ENCODE measurements at regions of chr18 and their contacts with region 1.

Region 1: GRCh38 chr18:34976899-34977837 is 64.0 kb upstream of the MAPRE2 start:
- DNase-seq: peak; percentile 60 to 78 (median 72)
- ATAC-seq: peak; percentile 84
- H3K4me3 ChIP-seq: peak overlapping the region; percentile 74
- H3K4me3 Mint-ChIP-seq: peak overlapping the region; percentile 89 to 99 (median 94)
- H3K27ac ChIP-seq: peak overlapping the region; percentile 54
- H3K27ac Mint-ChIP-seq: peak overlapping the region in 6 of 9 donors; percentile 24 to 72 (median 39)
- H3K4me1 ChIP-seq: no peaks in the 10 kb centered on the region
- H3K4me1 Mint-ChIP-seq: peaks cover 18 to 37% (median 24%) of the 10 kb centered on the region in 7 donors
- H3K27me3 ChIP-seq: peaks cover 0 to 3% of the 10 kb centered on the region in 2 donors
- H3K27me3 Mint-ChIP-seq: peaks cover 0 to 66% (median 0%) of the 10 kb centered on the region in 5 donors

Region 2: GRCh38 chr18:34857320-34857719 is 119.8 kb before region 1 on chr18:
- CTCF ChIA-PET with region 1: no interaction called
- POLR2A ChIA-PET with region 1: no interaction called
- intact Hi-C with region 1: loop called (anchors 1 kb)
- DNase-seq: no peak
- ATAC-seq: no peak
- H3K4me3 ChIP-seq: no peak overlapping the region
- H3K4me3 Mint-ChIP-seq: no peak overlapping the region
- H3K27ac ChIP-seq: no peak overlapping the region
- H3K27ac Mint-ChIP-seq: no peak overlapping the region
- H3K4me1 ChIP-seq: no peaks in the 10 kb centered on the region
- H3K4me1 Mint-ChIP-seq: peaks cover 0 to 12% (median 8%) of the 10 kb centered on the region in 7 donors
- H3K27me3 ChIP-seq: no peaks in the 10 kb centered on the region
- H3K27me3 Mint-ChIP-seq: peaks cover 0 to 32% (median 0%) of the 10 kb centered on the region in 5 donors

Region 3: DNA sequence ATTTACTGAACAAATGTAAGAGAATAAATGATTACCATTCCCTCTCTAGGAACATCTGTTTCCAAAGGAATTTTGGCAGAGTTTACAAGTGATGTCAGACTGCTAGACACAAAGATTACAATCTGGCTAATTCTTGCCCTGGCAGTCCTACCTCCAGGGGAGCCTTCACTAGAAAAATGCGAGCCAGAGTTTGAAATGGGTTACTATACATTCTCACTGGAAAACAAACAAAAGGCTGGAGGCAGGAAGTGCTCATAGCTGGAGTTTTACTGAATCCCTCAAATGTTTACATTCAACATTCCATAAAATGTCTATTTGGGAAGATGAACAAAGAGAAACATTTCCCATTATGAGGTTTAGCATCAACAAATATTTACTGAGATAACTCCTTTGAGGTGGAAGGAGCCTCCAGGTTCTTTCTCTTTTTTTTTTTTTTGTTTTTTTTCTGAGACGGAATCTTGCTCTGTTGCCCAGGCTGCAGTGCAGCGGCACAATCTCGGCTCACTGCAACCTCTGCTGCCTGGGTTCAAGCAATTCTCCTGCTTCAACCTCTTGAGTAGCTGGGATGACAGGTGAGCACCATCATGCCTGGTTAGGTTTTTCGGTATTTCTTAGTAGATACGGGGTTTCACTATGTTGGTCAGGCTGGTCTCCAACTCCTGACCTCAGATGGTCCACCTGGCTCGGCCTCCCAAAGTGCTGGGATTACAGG is 65.0 kb before region 1 on chr18:
- CTCF ChIA-PET with region 1: no interaction called
- POLR2A ChIA-PET with region 1: no interaction called
- intact Hi-C with region 1: no loop called
- DNase-seq: no peak
- ATAC-seq: no peak
- H3K4me3 ChIP-seq: no peak overlapping the region
- H3K4me3 Mint-ChIP-seq: no peak overlapping the region
- H3K27ac ChIP-seq: no peak overlapping the region
- H3K27ac Mint-ChIP-seq: no peak overlapping the region
- H3K4me1 ChIP-seq: no peaks in the 10 kb centered on the region
- H3K4me1 Mint-ChIP-seq: no peaks in the 10 kb centered on the region
- H3K27me3 ChIP-seq: no peaks in the 10 kb centered on the region
- H3K27me3 Mint-ChIP-seq: peaks cover 0 to 5% (median 0%) of the 10 kb centered on the region in 5 donors

Region 4: DNA sequence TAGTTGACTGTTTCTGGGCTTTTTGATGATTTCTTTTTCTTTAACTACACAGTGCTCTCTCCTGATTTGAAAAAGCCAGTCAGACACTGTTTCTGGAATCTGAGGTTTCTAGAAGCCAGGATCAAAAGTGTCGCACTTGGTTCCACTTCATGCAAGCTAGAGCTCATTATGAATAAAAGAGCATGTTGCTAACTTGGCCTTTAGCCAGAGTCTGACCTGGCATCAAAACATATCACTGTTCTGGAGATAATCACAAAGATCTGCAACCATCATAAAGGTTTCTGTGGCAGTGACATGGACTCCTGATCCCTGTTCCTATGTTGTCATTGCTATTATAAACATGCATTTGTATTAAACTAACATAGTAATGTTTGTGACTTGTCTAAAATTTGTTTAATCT is 12.1 kb before region 1 on chr18:
- CTCF ChIA-PET with region 1: no interaction called
- POLR2A ChIA-PET with region 1: no interaction called
- intact Hi-C with region 1: no loop called
- DNase-seq: no peak
- ATAC-seq: no peak
- H3K4me3 ChIP-seq: no peak overlapping the region
- H3K4me3 Mint-ChIP-seq: no peak overlapping the region
- H3K27ac ChIP-seq: no peak overlapping the region
- H3K27ac Mint-ChIP-seq: no peak overlapping the region
- H3K4me1 ChIP-seq: no peaks in the 10 kb centered on the region
- H3K4me1 Mint-ChIP-seq: no peaks in the 10 kb centered on the region
- H3K27me3 ChIP-seq: no peaks in the 10 kb centered on the region
- H3K27me3 Mint-ChIP-seq: peaks cover 0 to 22% (median 3%) of the 10 kb centered on the region in 5 donors

Region 5: GRCh38 chr18:35005963-35006577 is 28.9 kb after region 1 on chr18:
- CTCF ChIA-PET with region 1: interaction called, 3 read pairs
- POLR2A ChIA-PET with region 1: no interaction called
- intact Hi-C with region 1: loop called in 1 of 2 experiments (anchors 5 kb)
- DNase-seq: peak in 7 of 9 donors; percentile 29 to 66 (median 54)
- ATAC-seq: peak; percentile 80
- H3K4me3 ChIP-seq: no peak overlapping the region
- H3K4me3 Mint-ChIP-seq: no peak overlapping the region
- H3K27ac ChIP-seq: no peak overlapping the region
- H3K27ac Mint-ChIP-seq: no peak overlapping the region
- H3K4me1 ChIP-seq: no peaks in the 10 kb centered on the region
- H3K4me1 Mint-ChIP-seq: no peaks in the 10 kb centered on the region
- H3K27me3 ChIP-seq: no peaks in the 10 kb centered on the region
- H3K27me3 Mint-ChIP-seq: no peaks in the 10 kb centered on the region

Region 6: DNA sequence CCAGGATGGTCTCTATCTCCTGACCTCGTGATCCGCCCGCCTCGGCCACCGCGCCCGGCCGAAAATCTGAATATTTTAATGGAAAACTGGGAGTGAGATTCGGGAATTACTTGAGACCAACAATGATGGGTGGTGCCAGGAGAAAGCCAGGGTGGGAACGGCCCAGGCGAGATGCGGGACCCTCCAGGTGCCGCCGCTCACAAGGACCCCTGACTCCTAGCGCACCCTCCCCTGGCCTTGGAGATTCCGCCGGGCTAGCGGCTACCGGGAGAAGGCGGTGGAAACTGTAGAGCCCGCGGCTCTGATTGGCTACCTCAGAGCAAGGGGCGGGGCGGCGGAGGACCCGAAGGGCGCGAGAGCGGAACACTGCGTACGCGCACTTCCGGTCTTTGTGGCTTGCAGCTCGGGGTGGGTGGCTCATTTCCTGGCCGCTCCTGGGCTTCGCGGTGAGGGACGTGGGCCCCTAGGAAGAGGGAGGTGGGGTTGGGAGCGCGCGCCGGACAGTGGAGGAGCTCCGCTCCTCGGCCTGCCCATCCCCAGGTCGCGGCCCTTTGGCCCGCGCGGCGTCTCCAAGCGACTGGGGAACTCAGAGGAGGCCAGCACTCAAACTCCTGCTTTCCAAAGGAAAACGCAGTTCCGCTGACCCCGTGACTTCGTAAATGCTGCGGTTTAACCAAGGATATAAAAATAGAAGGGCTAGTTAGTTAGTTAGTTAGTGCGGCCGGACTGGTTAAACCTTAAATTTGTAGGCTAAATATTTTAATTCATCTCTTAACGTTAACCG is 263.7 kb after region 1 on chr18 and contains the start of gene ZNF397:
- CTCF ChIA-PET with region 1: no interaction called
- POLR2A ChIA-PET with region 1: no interaction called
- intact Hi-C with region 1: loop called in 1 of 2 experiments (anchors 2 kb)
- DNase-seq: peak; percentile 87 to 96 (median 91)
- ATAC-seq: peak; percentile 99
- H3K4me3 ChIP-seq: peak within 1 kb of the TSS; percentile 94
- H3K4me3 Mint-ChIP-seq: peak within 1 kb of the TSS; percentile 88 to 98 (median 96)
- H3K27ac ChIP-seq: peak within 1 kb of the TSS; percentile 97
- H3K27ac Mint-ChIP-seq: peak within 1 kb of the TSS; percentile 90 to 99 (median 98)
- H3K4me1 ChIP-seq: peaks cover 9 to 17% of the 10 kb centered on the region in 2 donors
- H3K4me1 Mint-ChIP-seq: peaks cover 16 to 41% (median 31%) of the 10 kb centered on the region in 7 donors
- H3K27me3 ChIP-seq: no peaks in the 10 kb centered on the region
- H3K27me3 Mint-ChIP-seq: no peaks in the 10 kb centered on the region
- total RNA-seq, gene ZNF397: 12.1 to 59.1 (median 27.6) TPM

Region 7: DNA sequence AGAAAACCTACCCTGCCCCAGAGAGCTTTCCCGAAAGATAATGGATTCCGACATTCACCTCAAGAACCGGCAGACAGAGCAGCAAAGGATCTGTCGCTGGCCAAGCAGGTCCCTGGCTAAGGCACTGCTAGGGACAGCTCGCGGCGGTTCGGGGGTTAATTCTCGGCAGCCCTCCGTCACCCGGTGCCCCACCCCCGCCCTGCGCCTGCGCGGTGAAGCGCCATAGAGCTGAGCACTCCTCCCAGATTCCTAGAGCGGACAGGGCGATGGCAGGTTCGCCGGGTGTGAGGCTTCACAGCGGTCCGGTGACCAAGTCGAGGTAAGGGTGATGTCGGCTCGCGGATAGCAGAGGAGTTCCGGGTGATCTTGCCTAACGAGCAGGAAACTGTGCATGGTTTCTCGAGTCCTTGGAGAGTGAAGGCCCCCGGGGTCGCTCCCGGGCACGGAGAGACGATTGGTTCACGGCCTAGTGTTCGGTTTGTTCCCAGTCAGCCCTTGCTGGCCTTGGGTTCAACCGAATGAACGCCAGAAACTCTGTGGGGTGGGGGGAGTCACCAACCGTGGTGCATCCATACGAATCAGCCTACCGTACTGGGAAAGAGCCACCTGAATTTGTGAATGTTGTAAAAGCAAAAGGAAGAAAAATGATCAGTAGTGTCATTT is 313.0 kb after region 1 on chr18 and contains the start of gene ZSCAN30:
- CTCF ChIA-PET with region 1: no interaction called
- POLR2A ChIA-PET with region 1: interaction called, 3 read pairs
- intact Hi-C with region 1: loop called (anchors 1 to 5 kb)
- DNase-seq: peak; percentile 90 to 96 (median 94)
- ATAC-seq: peak; percentile 99
- H3K4me3 ChIP-seq: peak within 1 kb of the TSS; percentile 90
- H3K4me3 Mint-ChIP-seq: peak within 1 kb of the TSS; percentile 97 to 99 (median 98)
- H3K27ac ChIP-seq: peak within 1 kb of the TSS; percentile 86
- H3K27ac Mint-ChIP-seq: peak within 1 kb of the TSS; percentile 94 to 100 (median 98)
- H3K4me1 ChIP-seq: peaks cover 16 to 18% of the 10 kb centered on the region in 2 donors
- H3K4me1 Mint-ChIP-seq: peaks cover 29 to 86% (median 75%) of the 10 kb centered on the region in 7 donors
- H3K27me3 ChIP-seq: no peaks in the 10 kb centered on the region
- H3K27me3 Mint-ChIP-seq: no peaks in the 10 kb centered on the region
- total RNA-seq, gene ZSCAN30: 14.0 to 23.2 (median 20.8) TPM

Region 8: DNA sequence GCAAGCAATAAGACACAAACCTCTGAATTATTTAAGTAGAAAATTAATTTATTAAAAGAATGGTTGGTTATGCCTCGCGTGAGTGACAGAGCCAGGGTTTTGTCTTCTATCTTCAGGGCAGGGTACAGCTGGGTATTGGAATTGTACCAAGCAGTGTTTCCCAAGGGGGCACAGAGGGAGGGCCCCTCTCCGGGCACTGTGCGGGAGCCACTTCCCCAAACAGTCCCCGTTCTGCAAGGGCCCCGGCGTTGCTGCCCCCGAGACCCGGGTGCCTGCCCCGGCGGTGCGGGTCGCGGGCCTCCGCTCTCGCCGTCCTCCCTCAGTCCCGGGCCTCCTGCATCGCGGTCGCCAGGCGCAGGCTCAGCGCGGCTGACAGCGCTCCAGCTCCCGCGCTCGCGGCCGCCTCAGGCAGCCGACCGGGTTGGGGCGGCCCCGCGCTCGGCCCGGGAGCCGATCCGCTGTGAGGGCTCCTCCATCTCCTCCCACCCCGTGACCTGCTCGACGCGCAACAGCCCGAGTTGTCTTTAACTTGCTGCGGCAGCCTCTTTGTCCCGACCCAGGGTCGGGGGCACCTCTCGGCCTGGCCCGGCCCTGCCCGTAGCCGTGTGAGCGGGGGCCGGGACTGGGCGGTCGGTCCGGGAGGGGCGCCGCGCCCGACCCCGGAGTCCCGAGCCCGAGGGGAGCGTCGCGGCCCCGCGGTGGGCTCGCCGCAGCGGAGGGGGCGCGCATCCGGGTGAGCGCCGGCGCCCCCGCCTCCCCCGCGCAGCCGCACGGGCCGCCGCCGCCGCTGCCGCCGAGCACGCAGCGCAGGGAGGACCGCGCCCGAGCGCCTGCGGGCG is 603.8 kb after region 1 on chr18:
- CTCF ChIA-PET with region 1: no interaction called
- POLR2A ChIA-PET with region 1: no interaction called
- intact Hi-C with region 1: loop called in 1 of 2 experiments (anchors 10 kb)
- DNase-seq: peak; percentile 54 to 70 (median 63)
- ATAC-seq: peak; percentile 84
- H3K4me3 ChIP-seq: peak overlapping the region; percentile 61
- H3K4me3 Mint-ChIP-seq: peak overlapping the region; percentile 60 to 80 (median 72)
- H3K27ac ChIP-seq: peak overlapping the region; percentile 77
- H3K27ac Mint-ChIP-seq: peak overlapping the region in 5 of 9 donors; percentile 37 to 80 (median 63)
- H3K4me1 ChIP-seq: peaks cover 11% of the 10 kb centered on the region in 2 donors
- H3K4me1 Mint-ChIP-seq: peaks cover 13 to 39% (median 28%) of the 10 kb centered on the region in 7 donors
- H3K27me3 ChIP-seq: no peaks in the 10 kb centered on the region
- H3K27me3 Mint-ChIP-seq: peaks cover 0 to 18% (median 7%) of the 10 kb centered on the region in 5 donors

Region 9: GRCh38 chr18:36828630-36829361 is 1851.6 kb after region 1 on chr18 and contains the starts of genes KIAA1328 and TPGS2:
- CTCF ChIA-PET with region 1: no interaction called
- POLR2A ChIA-PET with region 1: no interaction called
- intact Hi-C with region 1: loop called in 1 of 2 experiments (anchors 1 kb)
- DNase-seq: peak; percentile 77 to 90 (median 87)
- ATAC-seq: peak; percentile 96
- H3K4me3 ChIP-seq: peak within 1 kb of the TSS; percentile 79
- H3K4me3 Mint-ChIP-seq: peak within 1 kb of the TSS; percentile 73 to 98 (median 92)
- H3K27ac ChIP-seq: peak within 1 kb of the TSS; percentile 75
- H3K27ac Mint-ChIP-seq: peak within 1 kb of the TSS; percentile 57 to 98 (median 90)
- H3K4me1 ChIP-seq: peaks cover 15 to 18% of the 10 kb centered on the region in 2 donors
- H3K4me1 Mint-ChIP-seq: peaks cover 27 to 60% (median 47%) of the 10 kb centered on the region in 7 donors
- H3K27me3 ChIP-seq: no peaks in the 10 kb centered on the region
- H3K27me3 Mint-ChIP-seq: no peaks in the 10 kb centered on the region
- total RNA-seq, gene KIAA1328: 8.1 to 17.6 (median 16.0) TPM
- total RNA-seq, gene TPGS2: 16.9 to 92.8 (median 53.5) TPM

Measured in naive thymus-derived CD4-positive, alpha-beta T cell (primary cell).